ENCODE measurements at regions of chr11 and their contacts with region 1.

Region 1: GRCh38 chr11:41175304-41175972 is 284.0 kb downstream of the LRRC4C start:
- DNase-seq: peak; percentile 8
- H3K4me3 ChIP-seq: no peak overlapping the region
- H3K27ac ChIP-seq: no peak overlapping the region
- H3K4me1 ChIP-seq: no peaks in the 10 kb centered on the region
- H3K27me3 ChIP-seq: no peaks in the 10 kb centered on the region
- CTCF ChIP-seq: peak in 1 of 2 donors; percentile 53

Region 2: GRCh38 chr11:40877256-40877655 is 298.2 kb before region 1 on chr11:
- CTCF ChIA-PET with region 1: no interaction called
- dilution Hi-C with region 1: no loop called
- in situ Hi-C with region 1: no loop called
- intact Hi-C with region 1: loop called (anchors 5 kb)
- DNase-seq: peak; percentile 75
- H3K4me3 ChIP-seq: no peak overlapping the region
- H3K27ac ChIP-seq: peak overlapping the region; percentile 47
- H3K4me1 ChIP-seq: peaks cover 14% of the 10 kb centered on the region
- H3K27me3 ChIP-seq: no peaks in the 10 kb centered on the region
- CTCF ChIP-seq: no peak

Region 3: DNA sequence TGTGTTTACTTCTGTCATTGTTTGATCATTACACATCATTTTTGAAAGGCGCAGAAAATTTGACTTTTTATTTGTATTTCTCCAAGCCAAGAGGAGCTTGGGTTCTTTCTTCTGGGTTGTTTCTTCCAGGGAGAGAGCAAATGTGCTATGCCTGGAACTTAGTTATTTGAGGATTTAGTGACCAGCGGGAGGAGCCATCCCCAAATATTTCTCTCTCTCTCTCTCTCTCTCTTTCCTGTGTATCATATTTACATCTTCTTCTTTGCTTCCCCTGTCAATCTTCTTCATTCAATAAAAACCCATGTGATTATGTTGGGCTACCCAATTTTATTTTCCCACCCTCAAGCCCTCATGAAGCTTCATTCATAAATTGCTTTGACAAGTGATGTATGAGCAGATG is 250.5 kb before region 1 on chr11:
- CTCF ChIA-PET with region 1: no interaction called
- dilution Hi-C with region 1: no loop called
- in situ Hi-C with region 1: no loop called
- intact Hi-C with region 1: loop called (anchors 1 kb)
- DNase-seq: peak; percentile 4
- H3K4me3 ChIP-seq: no peak overlapping the region
- H3K27ac ChIP-seq: no peak overlapping the region
- H3K4me1 ChIP-seq: no peaks in the 10 kb centered on the region
- H3K27me3 ChIP-seq: no peaks in the 10 kb centered on the region
- CTCF ChIP-seq: peak in 1 of 2 donors; percentile 57

Region 4: DNA sequence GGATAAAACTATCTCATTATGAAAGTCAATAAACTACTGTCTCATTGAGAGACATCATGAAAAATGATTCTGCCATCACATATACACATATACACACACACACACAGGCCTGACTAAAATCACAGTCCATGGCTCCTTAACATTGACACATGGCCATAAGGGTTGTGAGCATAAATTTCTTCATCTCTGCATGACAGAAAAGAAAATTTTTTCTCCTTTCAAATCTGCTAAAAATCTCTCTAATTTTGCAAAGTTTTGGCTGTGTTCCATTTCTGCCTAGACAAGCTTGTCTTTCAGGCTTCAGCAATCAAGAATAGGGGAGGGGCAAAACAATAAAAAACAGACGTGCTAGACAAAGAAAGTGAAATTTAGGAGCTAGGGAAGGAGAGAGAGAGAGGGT is 40.5 kb before region 1 on chr11:
- CTCF ChIA-PET with region 1: no interaction called
- dilution Hi-C with region 1: no loop called
- in situ Hi-C with region 1: no loop called
- intact Hi-C with region 1: no loop called
- DNase-seq: no peak
- H3K4me3 ChIP-seq: no peak overlapping the region
- H3K27ac ChIP-seq: no peak overlapping the region
- H3K4me1 ChIP-seq: no peaks in the 10 kb centered on the region
- H3K27me3 ChIP-seq: no peaks in the 10 kb centered on the region
- CTCF ChIP-seq: no peak

Region 5: DNA sequence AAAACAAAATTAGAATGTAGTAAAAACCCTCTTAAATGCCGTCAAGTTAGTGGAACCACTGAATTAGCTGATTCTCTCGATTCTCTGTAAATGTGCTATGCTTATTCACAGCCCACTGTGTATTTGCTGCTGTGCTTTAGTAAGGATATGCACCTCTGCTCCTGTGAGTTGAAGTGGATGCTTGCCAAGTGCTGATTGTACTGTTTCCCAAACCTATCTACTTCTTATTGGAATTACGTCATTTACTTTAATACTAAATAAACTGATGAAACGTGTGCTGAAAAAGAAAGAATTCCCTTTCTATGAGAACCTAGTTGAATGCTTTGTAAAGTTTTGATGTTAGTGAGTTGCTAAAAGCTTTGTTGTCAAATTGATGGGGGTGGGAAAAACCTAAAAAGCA is 125.6 kb after region 1 on chr11:
- CTCF ChIA-PET with region 1: no interaction called
- dilution Hi-C with region 1: no loop called
- in situ Hi-C with region 1: no loop called
- intact Hi-C with region 1: no loop called
- DNase-seq: no peak
- H3K4me3 ChIP-seq: no peak overlapping the region
- H3K27ac ChIP-seq: no peak overlapping the region
- H3K4me1 ChIP-seq: no peaks in the 10 kb centered on the region
- H3K27me3 ChIP-seq: no peaks in the 10 kb centered on the region
- CTCF ChIP-seq: no peak

Measured in mammary epithelial cell (primary cell).